ACHN (cell line): ENCODE measurements at regions of chr2 and their contacts with region 1.

Region 1: GRCh38 chr2:215454519-215455246 is 18.8 kb upstream of the FN1 start:
- DNase-seq: peak; percentile 46

Region 2: GRCh38 chr2:215920244-215921100 is 465.8 kb after region 1 on chr2:
- in situ Hi-C with region 1: loop called (anchors 25 kb)
- DNase-seq: peak; percentile 74